Motor neuron (in vitro differentiated cells): ENCODE measurements at regions of chr22 and their contacts with region 1.

Region 1: GRCh38 chr22:39405346-39406085 is 5.9 kb downstream of the TAB1 start:
- ATAC-seq: peak; percentile 74 to 91 (median 84)
- H3K4me3 ChIP-seq: no peak overlapping the region
- H3K27ac ChIP-seq: no peak overlapping the region
- H3K4me1 ChIP-seq: peaks cover 5 to 11% of the 10 kb centered on the region in 2 donors

Region 2: DNA sequence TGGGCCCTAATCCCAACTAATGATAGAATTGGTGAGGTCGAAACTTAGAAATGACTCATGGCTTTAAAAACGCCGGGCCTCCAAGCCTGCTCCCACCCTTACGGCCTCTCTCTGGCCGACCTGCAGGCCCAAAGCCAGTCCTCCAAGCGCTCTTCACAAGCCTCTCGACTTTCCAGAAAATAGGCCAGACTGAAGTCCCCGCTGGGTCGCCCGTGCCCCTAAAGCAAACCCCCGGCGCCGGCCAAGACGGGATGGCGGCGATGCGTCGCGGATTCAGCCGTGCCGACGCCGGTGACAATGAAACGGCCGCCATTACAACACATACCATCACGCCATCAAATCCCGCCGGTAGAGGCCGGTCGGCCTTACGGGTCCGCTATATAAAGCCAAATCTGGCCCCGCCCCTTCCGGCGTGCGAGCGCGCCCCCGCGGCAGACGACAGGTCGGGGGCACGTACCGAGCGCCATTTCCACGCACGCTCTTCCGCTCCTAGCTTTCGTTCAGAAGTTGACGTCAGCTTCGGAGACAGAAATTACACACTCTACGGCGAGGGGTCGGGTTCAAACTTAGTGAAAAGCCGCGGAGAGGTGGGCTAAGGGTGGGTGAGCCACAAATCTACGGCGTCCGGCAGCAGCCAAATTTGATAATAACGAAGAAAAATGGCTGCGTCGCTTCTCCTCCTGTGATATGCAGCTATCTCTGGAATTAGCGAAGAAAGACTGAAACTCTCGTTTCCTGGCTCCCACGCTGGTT is 86.1 kb before region 1 on chr22 and contains the start of gene RPL3:
- in situ Hi-C with region 1: loop called in 1 of 9 experiments (anchors 25 kb)
- ATAC-seq: peak; percentile 58 to 89 (median 80)
- H3K4me3 ChIP-seq: peak within 1 kb of the TSS; percentile 45 to 93 (median 78)
- H3K27ac ChIP-seq: peak within 1 kb of the TSS; percentile 96 to 98
- H3K4me1 ChIP-seq: peaks cover 25 to 32% of the 10 kb centered on the region in 2 donors
- total RNA-seq, gene RPL3: 1,236 to 3,241 (median 1,964) TPM